ENCODE measurements at regions of chr6 and their contacts with region 1.

Region 1: DNA sequence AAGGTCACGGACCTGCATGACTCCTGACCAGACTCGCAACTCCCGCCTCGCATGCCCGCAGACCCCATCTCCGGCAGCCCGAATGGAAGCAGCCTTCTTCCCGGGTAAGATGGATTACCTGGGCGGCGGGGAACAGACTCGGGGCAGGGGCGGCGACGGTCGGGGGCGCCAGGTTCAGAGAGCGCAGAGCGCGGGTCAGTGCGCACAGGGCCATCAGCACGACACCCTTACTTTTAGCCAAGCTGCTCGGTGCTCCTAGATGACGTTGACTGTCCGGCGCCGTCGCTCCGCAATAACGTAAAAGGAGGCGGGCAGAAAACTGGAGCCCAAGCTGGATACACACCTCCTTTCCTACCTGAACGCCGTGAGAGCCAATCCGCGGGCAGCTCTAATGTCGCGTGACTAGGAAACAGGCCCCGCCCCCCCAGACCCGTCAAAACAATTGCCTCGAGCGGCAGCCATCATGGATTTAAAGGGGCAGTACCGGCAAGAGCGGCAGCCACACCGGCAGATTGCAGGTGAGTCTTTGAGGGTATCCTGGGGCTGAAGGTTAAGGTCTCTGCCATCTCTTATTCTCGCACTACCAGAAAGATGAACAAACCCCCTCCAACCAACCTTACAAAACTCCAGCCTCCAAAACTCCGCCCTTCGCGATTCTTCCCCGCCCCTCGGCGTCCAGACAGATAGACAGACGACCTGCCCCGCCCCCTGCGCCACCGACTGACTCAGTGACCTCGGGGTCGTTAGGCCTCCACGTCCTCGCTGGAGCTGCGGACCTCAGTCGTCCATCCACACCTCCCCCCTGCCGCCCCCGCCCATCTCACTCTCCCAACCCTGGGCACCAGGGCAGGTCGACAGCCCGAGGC is at the starts of genes KLC4 and MRPL2:
- DNase-seq: peak; percentile 96
- H3K4me3 Mint-ChIP-seq: peak within 1 kb of the TSS; percentile 96
- H3K27ac Mint-ChIP-seq: peak within 1 kb of the TSS; percentile 98
- H3K4me1 Mint-ChIP-seq: peaks cover 41% of the 10 kb centered on the region
- H3K27me3 Mint-ChIP-seq: no peaks in the 10 kb centered on the region
- total RNA-seq, gene KLC4: 12.7 and 13.7 TPM in 2 replicates
- total RNA-seq, gene MRPL2: 89.6 and 97.4 TPM in 2 replicates

Region 2: GRCh38 chr6:42782622-42783176 is 276.7 kb before region 1 on chr6:
- intact Hi-C with region 1: loop called (anchors 10 kb)
- DNase-seq: peak; percentile 48
- H3K4me3 Mint-ChIP-seq: peak overlapping the region; percentile 96
- H3K27ac Mint-ChIP-seq: peak overlapping the region; percentile 98
- H3K4me1 Mint-ChIP-seq: peaks cover 28% of the 10 kb centered on the region
- H3K27me3 Mint-ChIP-seq: no peaks in the 10 kb centered on the region

Region 3: DNA sequence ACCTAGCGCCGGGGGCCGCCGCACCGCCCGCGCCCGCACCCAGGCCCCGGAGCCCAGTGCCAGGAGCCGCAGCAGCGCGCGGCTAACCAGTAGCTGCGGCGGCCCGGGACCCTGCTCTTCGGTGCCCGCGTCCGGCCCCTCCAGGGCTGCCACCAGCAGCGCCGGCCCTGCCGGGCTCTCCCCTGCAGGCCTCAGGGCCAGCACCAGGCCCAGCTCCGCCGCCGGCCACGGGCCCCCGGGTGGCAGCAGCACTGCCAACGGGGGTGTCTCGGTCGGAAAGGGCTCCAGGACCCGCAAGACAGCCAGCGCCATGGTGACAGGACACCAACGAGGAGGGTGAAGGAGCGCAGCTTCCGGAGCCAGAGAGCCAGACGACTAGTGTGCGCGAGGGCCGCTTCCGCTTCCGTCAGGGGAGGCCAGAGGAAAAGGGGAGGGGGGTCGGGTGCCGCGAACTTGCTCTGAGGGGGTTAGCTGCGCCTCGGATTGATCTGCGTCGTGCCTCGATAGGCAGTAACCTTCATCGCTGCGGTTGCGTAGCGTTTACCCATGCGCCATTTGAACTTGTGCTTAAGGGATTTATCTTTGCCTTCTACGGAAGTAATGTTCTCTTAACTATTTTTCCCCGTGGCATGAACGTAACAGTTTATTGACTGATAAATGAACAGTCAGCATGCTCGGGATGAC is 80.4 kb before region 1 on chr6 and contains the start of gene PEX6:
- intact Hi-C with region 1: loop called (anchors 1 kb)
- DNase-seq: peak; percentile 94
- H3K4me3 Mint-ChIP-seq: peak within 1 kb of the TSS; percentile 91
- H3K27ac Mint-ChIP-seq: peak within 1 kb of the TSS; percentile 96
- H3K4me1 Mint-ChIP-seq: peaks cover 38% of the 10 kb centered on the region
- H3K27me3 Mint-ChIP-seq: no peaks in the 10 kb centered on the region
- total RNA-seq, gene PEX6: 20.9 TPM in 2 replicates

Region 4: GRCh38 chr6:43013843-43014433 is 45.5 kb before region 1 on chr6 and contains the starts of genes KLHDC3 and MEA1:
- intact Hi-C with region 1: loop called (anchors 1 kb)
- DNase-seq: peak; percentile 99
- H3K4me3 Mint-ChIP-seq: peak within 1 kb of the TSS; percentile 93
- H3K27ac Mint-ChIP-seq: peak within 1 kb of the TSS; percentile 78
- H3K4me1 Mint-ChIP-seq: peaks cover 41% of the 10 kb centered on the region
- H3K27me3 Mint-ChIP-seq: peaks cover 2% of the 10 kb centered on the region
- total RNA-seq, gene KLHDC3: 76.6 and 77.0 TPM in 2 replicates
- total RNA-seq, gene MEA1: 89.3 and 92.7 TPM in 2 replicates

Region 5: GRCh38 chr6:43024436-43024835 is 35.0 kb before region 1 on chr6:
- intact Hi-C with region 1: no loop called
- DNase-seq: no peak
- H3K4me3 Mint-ChIP-seq: peak overlapping the region; percentile 61
- H3K27ac Mint-ChIP-seq: peak overlapping the region; percentile 53
- H3K4me1 Mint-ChIP-seq: peaks cover 20% of the 10 kb centered on the region
- H3K27me3 Mint-ChIP-seq: no peaks in the 10 kb centered on the region

Region 6: DNA sequence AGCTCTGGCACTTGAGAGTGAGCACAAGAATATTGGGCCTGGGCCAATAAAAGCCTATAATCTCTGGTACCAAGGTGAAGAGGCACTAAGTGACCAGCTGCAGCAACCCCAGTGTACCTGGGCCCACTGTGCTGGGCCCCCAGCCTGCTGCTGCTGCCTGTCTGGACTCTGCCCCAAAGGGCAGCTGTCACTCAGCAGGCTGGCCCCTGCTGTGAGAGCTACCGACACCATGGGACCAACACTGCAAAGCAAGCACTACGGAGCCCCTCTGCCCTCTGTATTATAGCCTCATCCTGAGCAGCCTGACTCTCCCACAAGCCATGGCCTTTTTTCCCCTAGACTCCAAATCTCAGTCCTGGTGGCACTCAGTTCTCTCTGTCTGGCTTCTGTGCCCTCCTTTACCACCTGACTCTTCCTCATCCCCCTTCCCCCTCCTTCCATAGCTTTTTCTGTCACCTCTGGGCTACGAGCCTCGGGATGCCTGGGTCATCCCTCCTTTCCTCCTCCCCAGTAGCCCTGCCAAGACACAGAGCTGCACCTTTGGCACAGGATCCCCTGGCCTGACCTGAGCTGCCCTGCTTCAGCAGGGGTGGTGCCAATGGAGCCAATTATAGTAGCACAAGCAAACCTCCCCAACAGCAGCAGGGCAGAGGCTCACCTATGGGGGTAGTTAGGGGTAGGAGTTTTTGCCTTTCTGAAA is 23.8 kb before region 1 on chr6:
- intact Hi-C with region 1: no loop called
- DNase-seq: no peak
- H3K4me3 Mint-ChIP-seq: no peak overlapping the region
- H3K27ac Mint-ChIP-seq: no peak overlapping the region
- H3K4me1 Mint-ChIP-seq: peaks cover 6% of the 10 kb centered on the region
- H3K27me3 Mint-ChIP-seq: no peaks in the 10 kb centered on the region

Region 7: GRCh38 chr6:43070028-43070632 is 10.7 kb after region 1 on chr6:
- intact Hi-C with region 1: no loop called
- DNase-seq: no peak
- H3K4me3 Mint-ChIP-seq: no peak overlapping the region
- H3K27ac Mint-ChIP-seq: no peak overlapping the region
- H3K4me1 Mint-ChIP-seq: peaks cover 6% of the 10 kb centered on the region
- H3K27me3 Mint-ChIP-seq: no peaks in the 10 kb centered on the region

Region 8: GRCh38 chr6:43427406-43428111 is 368.2 kb after region 1 on chr6 and contains the start of gene ABCC10:
- intact Hi-C with region 1: loop called (anchors 1 kb)
- DNase-seq: peak; percentile 93
- H3K4me3 Mint-ChIP-seq: peak within 1 kb of the TSS; percentile 96
- H3K27ac Mint-ChIP-seq: peak within 1 kb of the TSS; percentile 96
- H3K4me1 Mint-ChIP-seq: peaks cover 17% of the 10 kb centered on the region
- H3K27me3 Mint-ChIP-seq: no peaks in the 10 kb centered on the region
- total RNA-seq, gene ABCC10: 40.5 and 43.6 TPM in 2 replicates

Region 9: GRCh38 chr6:43575772-43576551 is 516.6 kb after region 1 on chr6 and contains the starts of genes POLH and XPO5:
- intact Hi-C with region 1: loop called (anchors 10 kb)
- DNase-seq: peak; percentile 90
- H3K4me3 Mint-ChIP-seq: peak within 1 kb of the TSS; percentile 91
- H3K27ac Mint-ChIP-seq: peak within 1 kb of the TSS; percentile 86
- H3K4me1 Mint-ChIP-seq: peaks cover 43% of the 10 kb centered on the region
- H3K27me3 Mint-ChIP-seq: no peaks in the 10 kb centered on the region
- total RNA-seq, gene POLH: 35.7 and 39.1 TPM in 2 replicates
- total RNA-seq, gene XPO5: 135 and 149 TPM in 2 replicates

Measured in activated T-helper 1 cell treated with anti-CD3 and anti-CD28 coated beads, Interleukin-12 subunit alpha, Interleukin-12 subunit beta, Interleukin-2, Interleukin-4 antibody, amounts not matched to agents 30 ng/mL and 10 ng/mL and 1 ng/mL, durations not matched to agents 14 hours and 24 hours and 36 hours (primary cell).